ENCODE measurements at regions of chr10 and their contacts with region 1.

Region 1: DNA sequence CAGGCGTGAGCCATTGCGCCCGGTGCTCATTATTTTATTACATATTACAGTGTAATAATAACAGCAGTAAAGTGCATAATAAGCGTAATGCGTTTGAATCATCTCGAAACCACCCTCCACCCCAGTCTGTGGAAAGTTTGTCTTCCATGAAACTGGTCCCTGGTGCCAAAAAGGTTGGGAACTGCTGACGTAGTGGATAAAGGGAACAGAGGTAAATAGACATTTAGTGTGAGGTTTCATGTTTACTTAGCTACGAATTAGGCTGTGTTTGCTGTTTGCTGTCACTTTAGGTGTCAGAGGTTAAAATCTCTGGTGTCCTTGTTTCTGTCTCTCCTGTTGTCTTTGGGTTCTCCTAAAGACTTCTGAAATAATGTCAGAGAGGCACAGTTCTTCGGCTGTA is 60.3 kb upstream of the SLC39A12 start:
- DNase-seq: no peak
- ATAC-seq: no peak
- H3K4me3 ChIP-seq: no peak overlapping the region
- H3K27ac ChIP-seq: no peak overlapping the region
- H3K4me1 ChIP-seq: no peaks in the 10 kb centered on the region
- H3K27me3 ChIP-seq: peaks cover 0 to 4% (median 0%) of the 10 kb centered on the region in 7 donors
- CTCF ChIP-seq: no peak

Region 2: GRCh38 chr10:16408379-16408778 is 1483.1 kb before region 1 on chr10:
- intact Hi-C with region 1: loop called in 1 of 10 experiments (anchors 5 kb)
- DNase-seq: no peak
- ATAC-seq: no peak
- H3K4me3 ChIP-seq: no peak overlapping the region
- H3K27ac ChIP-seq: no peak overlapping the region
- H3K4me1 ChIP-seq: no peaks in the 10 kb centered on the region
- H3K27me3 ChIP-seq: peaks cover 0 to 10% (median 4%) of the 10 kb centered on the region in 7 donors
- CTCF ChIP-seq: no peak